ENCODE measurements at regions of chr14 and their contacts with region 1.

Region 1: GRCh38 chr14:85858634-85859033 is 328.7 kb downstream of the FLRT2 start:
- DNase-seq: no peak
- H3K4me3 ChIP-seq: no peak overlapping the region
- H3K27ac ChIP-seq: no peak overlapping the region
- H3K4me1 ChIP-seq: no peaks in the 10 kb centered on the region
- H3K27me3 ChIP-seq: no peaks in the 10 kb centered on the region
- CTCF ChIP-seq: no peak
- POLR2A ChIP-seq: no peak

Region 2: DNA sequence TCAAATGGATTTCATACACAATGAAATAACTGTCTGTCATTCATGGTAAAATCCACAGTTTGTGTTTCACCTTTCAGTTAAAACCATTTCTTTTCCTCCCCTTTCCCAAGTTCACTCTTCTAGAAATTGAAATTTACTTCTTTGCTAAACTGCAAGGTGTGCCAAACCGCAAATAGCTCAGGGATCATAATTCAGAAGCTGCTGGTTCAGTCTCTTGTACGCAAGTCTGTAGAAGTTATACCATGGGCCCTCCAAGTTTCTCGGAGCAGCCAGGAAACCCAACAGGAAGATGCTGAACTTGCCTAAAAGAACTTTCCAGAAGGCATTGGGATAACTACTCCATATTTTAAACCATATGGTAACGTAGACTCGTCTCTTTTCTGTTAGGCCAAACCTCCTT is 59.8 kb before region 1 on chr14:
- intact Hi-C with region 1: loop called (anchors 2 kb)
- DNase-seq: no peak
- H3K4me3 ChIP-seq: no peak overlapping the region
- H3K27ac ChIP-seq: no peak overlapping the region
- H3K4me1 ChIP-seq: no peaks in the 10 kb centered on the region
- H3K27me3 ChIP-seq: no peaks in the 10 kb centered on the region
- CTCF ChIP-seq: no peak
- POLR2A ChIP-seq: no peak

Region 3: GRCh38 chr14:86357876-86358275 is 499.2 kb after region 1 on chr14:
- intact Hi-C with region 1: no loop called
- DNase-seq: no peak
- H3K4me3 ChIP-seq: no peak overlapping the region
- H3K27ac ChIP-seq: no peak overlapping the region
- H3K4me1 ChIP-seq: no peaks in the 10 kb centered on the region
- H3K27me3 ChIP-seq: no peaks in the 10 kb centered on the region
- CTCF ChIP-seq: no peak
- POLR2A ChIP-seq: no peak